PC-9 (cell line): ENCODE measurements at regions of chr17 and their contacts with region 1.

Region 1: DNA sequence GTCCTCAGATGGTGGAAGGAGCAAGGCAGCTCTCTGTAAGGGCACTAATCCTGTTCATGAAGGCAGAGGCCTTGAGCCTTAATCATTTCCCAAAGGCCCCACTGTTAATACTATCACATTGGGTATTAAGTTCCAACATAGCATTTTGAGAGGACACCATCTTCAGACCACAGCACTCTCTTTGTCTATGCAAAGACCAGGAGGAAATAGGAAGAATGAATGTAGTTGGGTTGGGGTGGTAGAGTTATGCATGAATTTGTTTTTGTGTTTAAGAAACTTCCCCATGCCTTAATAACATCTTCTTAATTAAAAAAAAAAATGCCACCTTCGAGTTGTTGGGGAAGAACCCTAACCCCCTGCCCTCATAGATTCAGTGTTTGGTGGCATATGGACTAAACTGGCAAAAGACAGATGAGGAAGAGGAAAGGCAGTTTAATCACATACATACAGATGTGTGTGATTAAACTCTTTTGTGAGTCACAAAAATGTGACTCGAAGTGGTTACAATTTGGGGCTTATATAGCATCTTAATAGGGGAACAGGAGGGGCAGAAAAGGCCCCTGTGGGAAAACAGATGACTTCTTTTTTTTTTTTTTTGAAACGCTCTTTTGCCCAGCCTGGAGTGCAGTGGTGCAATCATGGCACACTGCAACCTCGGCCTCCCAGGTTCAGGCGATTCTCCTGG is 35.0 kb upstream of the SLC5A10 start:
- DNase-seq: no peak
- H3K4me3 ChIP-seq: no peak overlapping the region
- H3K27ac ChIP-seq: no peak overlapping the region
- H3K4me1 ChIP-seq: peaks cover 15% of the 10 kb centered on the region
- H3K27me3 ChIP-seq: no peaks in the 10 kb centered on the region
- CTCF ChIP-seq: no peak

Region 2: DNA sequence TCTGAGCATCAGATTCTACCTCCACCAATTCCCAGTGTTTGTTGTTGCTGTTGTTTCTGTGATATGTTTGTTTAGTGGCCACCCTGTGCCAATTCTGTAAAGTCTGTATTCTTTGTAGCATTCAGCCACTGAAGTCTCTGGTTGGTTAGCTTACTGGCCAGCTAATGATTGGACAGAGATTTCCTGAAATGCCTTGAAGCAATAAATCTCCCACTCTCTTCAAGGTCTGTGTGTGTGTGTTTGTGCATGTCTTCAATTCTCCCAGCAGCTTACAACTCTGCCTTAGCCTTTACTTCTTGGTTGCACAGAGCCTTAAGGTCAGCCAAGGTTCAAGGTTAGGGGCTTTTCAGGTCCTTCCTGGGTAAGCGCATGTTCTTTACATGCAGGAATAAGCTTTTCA is 20.8 kb before region 1 on chr17:
- CTCF ChIA-PET with region 1: interaction called, 12 read pairs
- POLR2A ChIA-PET with region 1: no interaction called
- intact Hi-C with region 1: no loop called
- DNase-seq: no peak
- H3K4me3 ChIP-seq: no peak overlapping the region
- H3K27ac ChIP-seq: no peak overlapping the region
- H3K4me1 ChIP-seq: no peaks in the 10 kb centered on the region
- H3K27me3 ChIP-seq: no peaks in the 10 kb centered on the region
- CTCF ChIP-seq: no peak

Region 3: GRCh38 chr17:19361296-19361695 is 444.3 kb after region 1 on chr17:
- CTCF ChIA-PET with region 1: no interaction called
- POLR2A ChIA-PET with region 1: no interaction called
- intact Hi-C with region 1: no loop called
- DNase-seq: no peak
- H3K4me3 ChIP-seq: peak overlapping the region; percentile 86; the same call in 1 of the 2 replicates
- H3K27ac ChIP-seq: no peak overlapping the region
- H3K4me1 ChIP-seq: peaks cover 13% of the 10 kb centered on the region
- H3K27me3 ChIP-seq: no peaks in the 10 kb centered on the region
- CTCF ChIP-seq: no peak